H1 (cell line): ENCODE measurements at regions of chr12 and their contacts with region 1.

Region 1: GRCh38 chr12:110742718-110743570 is at the start of gene PPP1CC:
- DNase-seq: peak; percentile 77 to 94
- H3K4me3 ChIP-seq: peak within 1 kb of the TSS; percentile 83 to 98 (median 90)
- H3K27ac ChIP-seq: peak within 1 kb of the TSS; percentile 91; the same call in 1 of the 2 replicates
- H3K4me1 ChIP-seq: peaks cover 2 to 11% (median 8%) of the 10 kb centered on the region in 4 experiments; a peak in 5 of 7 replicates
- H3K27me3 ChIP-seq: no peaks in the 10 kb centered on the region
- CTCF ChIP-seq: no peak
- EP300 ChIP-seq: no peak
- POLR2A ChIP-seq: peak; percentile 77 to 85
- RAD21 ChIP-seq: 0 out of 4 replicates have a peak, but pooled peaks of 1 of the 2 experiments have one; percentile 2
- total RNA-seq, gene PPP1CC: 335 and 350 TPM in 2 replicates

Region 2: DNA sequence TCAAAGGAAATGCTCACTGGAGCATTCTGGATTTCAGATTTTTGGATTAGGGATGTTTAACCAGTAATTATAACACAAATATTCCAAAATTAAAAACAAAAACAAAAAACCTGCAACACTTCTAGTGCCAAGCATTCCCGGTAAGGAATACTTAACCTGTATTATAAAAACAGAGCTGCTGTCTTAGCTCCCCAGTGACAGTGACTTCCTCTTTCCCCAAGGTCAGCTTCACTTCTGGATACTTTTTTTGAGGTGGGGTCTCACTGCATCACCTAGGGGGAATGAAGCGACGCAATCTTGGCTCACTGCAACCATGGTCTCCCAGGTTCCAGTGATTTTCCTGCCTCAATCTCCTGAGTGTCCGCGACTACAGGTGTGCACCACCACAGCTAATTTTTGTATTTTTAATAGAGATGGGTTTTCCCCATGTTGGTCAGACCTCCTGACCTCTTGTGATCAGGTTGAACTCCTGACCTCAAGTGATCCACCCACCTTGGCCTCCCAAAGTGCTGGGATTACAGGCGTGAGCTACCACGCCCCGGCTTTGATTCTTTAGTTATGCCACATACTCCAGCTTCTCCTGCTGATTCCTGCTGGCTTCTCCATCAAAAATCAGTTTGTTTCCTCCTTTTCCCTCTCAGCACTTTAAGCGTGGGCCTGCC is 16.1 kb before region 1 on chr12:
- CTCF ChIA-PET with region 1: interaction called, 5 read pairs
- POLR2A ChIA-PET with region 1: interaction called, 27 read pairs
- DNase-seq: no peak
- H3K4me3 ChIP-seq: peak overlapping the region in 1 of 4 experiments; percentile 1; a peak in 1 of 8 replicates
- H3K27ac ChIP-seq: no peak overlapping the region
- H3K4me1 ChIP-seq: peaks cover 0 to 15% (median 8%) of the 10 kb centered on the region in 4 experiments; a peak in 3 of 7 replicates
- H3K27me3 ChIP-seq: no peaks in the 10 kb centered on the region
- CTCF ChIP-seq: no peak
- EP300 ChIP-seq: no peak
- POLR2A ChIP-seq: 0 out of 3 replicates have a peak, but pooled peaks of 1 of the 2 experiments have one; percentile 20
- RAD21 ChIP-seq: no peak

Region 3: DNA sequence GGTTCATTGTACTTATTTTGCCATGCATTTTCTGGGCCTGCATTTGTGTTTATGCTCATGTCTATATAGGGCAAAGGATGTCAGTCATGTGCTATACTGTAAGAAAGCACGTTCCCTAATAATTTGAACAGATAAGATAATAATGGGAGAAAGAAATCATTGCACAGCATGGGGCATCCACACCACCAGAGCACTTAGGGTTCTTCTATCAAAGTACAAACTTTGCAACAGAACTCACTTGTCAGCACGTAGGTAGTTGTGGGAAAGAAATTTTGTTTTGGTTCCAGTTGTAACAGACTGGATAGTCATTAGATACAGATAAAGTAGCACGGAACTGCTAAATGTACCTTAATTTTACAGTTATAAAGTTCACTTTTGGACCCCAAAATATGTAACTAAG is 10.4 kb before region 1 on chr12:
- CTCF ChIA-PET with region 1: interaction called, 5 read pairs
- POLR2A ChIA-PET with region 1: interaction called, 27 read pairs
- DNase-seq: no peak
- H3K4me3 ChIP-seq: no peak overlapping the region
- H3K27ac ChIP-seq: no peak overlapping the region
- H3K4me1 ChIP-seq: peaks cover 0 to 5% (median 5%) of the 10 kb centered on the region in 4 experiments; a peak in 4 of 7 replicates
- H3K27me3 ChIP-seq: no peaks in the 10 kb centered on the region
- CTCF ChIP-seq: no peak
- EP300 ChIP-seq: no peak
- POLR2A ChIP-seq: no peak
- RAD21 ChIP-seq: no peak

Region 4: DNA sequence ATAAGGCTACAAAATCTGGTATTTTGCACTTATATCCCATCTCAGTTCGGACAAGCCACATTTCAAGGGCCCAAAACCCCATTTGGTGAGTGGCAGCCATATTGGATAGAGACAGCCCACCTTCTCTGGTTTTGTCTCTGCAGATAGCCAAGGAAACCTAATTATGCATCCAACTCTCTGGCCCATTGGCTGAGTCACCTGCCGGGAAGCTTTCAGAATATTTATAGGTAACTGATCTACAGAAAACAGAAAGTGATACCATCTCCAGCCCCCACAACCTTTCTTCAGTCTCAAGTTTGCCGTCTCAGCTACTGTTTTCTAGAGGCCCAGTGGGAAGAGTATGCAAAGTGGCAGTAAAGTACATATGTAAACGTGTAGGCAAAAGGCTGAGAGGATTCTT is 33.5 kb after region 1 on chr12:
- CTCF ChIA-PET with region 1: interaction called, 3 read pairs
- POLR2A ChIA-PET with region 1: interaction called, 12 read pairs
- DNase-seq: no peak
- H3K4me3 ChIP-seq: no peak overlapping the region
- H3K27ac ChIP-seq: no peak overlapping the region
- H3K4me1 ChIP-seq: no peaks in the 10 kb centered on the region
- H3K27me3 ChIP-seq: no peaks in the 10 kb centered on the region
- CTCF ChIP-seq: no peak
- EP300 ChIP-seq: no peak
- POLR2A ChIP-seq: no peak
- RAD21 ChIP-seq: no peak